AG04450 (cell line): ENCODE measurements at regions of chr7 and their contacts with region 1.

Region 1: DNA sequence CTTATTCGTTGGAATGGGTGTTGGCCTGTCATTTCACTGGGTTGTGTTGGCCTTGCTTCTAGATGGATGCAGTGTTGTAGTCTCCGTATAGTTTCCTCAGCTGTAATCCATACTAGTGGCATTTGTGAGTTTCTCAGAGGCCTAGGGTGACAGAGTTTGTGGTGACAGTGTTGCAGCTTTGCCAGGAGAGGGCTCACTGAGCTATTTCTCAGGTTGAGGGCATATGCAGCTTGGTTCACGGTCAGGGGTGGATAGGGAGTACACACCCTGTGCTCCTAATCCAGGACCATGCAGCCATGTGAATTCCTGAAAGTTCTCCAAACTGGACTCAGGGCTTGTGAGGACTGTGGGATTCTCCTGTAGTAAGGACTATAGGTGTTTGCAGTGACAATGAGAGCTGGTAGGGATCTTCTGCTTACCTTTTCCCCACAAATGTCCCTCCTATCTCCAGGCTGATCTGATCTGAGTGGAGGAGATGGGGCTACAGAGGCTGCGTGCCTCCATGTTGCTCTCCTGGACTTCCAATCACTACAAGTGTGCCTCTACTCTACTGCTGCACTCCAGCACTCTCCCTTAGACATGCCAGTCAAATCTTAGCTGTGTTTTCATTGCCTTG is 229.0 kb downstream of the STK31 start:
- DNase-seq: no peak
- H3K4me3 ChIP-seq: no peak overlapping the region
- H3K27ac ChIP-seq: no peak overlapping the region
- H3K27me3 ChIP-seq: no peaks in the 10 kb centered on the region
- CTCF ChIP-seq: peak; percentile 68

Region 2: DNA sequence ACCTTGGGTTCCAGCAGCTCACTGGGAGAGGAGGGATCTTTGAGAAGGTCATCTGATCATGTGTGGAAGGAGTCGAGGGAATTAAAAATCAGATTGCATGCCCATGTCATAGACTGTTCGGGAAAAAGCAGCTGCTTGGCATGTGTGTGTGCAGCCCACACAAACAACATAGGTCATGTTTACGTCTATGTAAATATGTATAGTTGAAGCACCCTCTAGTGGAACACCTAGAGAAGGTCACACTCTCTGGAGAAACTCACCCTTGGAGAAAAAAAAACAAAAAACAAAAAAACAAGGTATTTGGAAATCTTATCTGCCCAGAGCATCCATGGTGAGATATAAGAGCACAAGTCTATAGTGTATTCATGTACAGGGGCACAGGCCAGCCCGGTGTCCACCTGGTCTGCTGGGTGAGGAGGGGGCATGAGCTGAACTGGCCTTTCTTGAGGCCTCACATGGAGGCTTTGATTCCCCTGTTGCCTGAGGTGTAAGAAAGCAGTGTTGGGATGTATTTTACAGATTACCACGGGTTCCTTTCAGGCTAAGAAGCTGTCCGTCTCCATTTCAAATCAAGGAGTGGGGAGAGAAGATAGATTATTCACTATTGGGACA is 443.0 kb after region 1 on chr7:
- CTCF ChIA-PET with region 1: interaction called, 13 read pairs
- POLR2A ChIA-PET with region 1: no interaction called
- DNase-seq: no peak
- H3K4me3 ChIP-seq: no peak overlapping the region
- H3K27ac ChIP-seq: no peak overlapping the region
- H3K27me3 ChIP-seq: peaks cover 4% of the 10 kb centered on the region
- CTCF ChIP-seq: peak; percentile 41; the same call in 1 of the 2 replicates

Region 3: GRCh38 chr7:24665564-24666294 is 726.7 kb after region 1 on chr7:
- CTCF ChIA-PET with region 1: interaction called, 15 read pairs
- POLR2A ChIA-PET with region 1: no interaction called
- DNase-seq: peak; percentile 29
- H3K4me3 ChIP-seq: no peak overlapping the region
- H3K27ac ChIP-seq: no peak overlapping the region
- H3K27me3 ChIP-seq: no peaks in the 10 kb centered on the region
- CTCF ChIP-seq: peak; percentile 67